CD4-positive, alpha-beta T cell (primary cell): ENCODE measurements at regions of chr16 and their contacts with region 1.

Region 1: GRCh38 chr16:19886073-19886941 is 1.7 kb upstream of the GPRC5B start:
- DNase-seq: peak; percentile 67 to 90 (median 79)
- ATAC-seq: peak; percentile 69
- H3K4me3 ChIP-seq: peak overlapping the region; percentile 69
- H3K4me3 Mint-ChIP-seq: peak overlapping the region; percentile 91
- H3K27ac ChIP-seq: no peak overlapping the region
- H3K27ac Mint-ChIP-seq: peak overlapping the region; percentile 22
- H3K4me1 ChIP-seq: peaks cover 34% of the 10 kb centered on the region
- H3K4me1 Mint-ChIP-seq: peaks cover 29% of the 10 kb centered on the region
- H3K27me3 ChIP-seq: peaks cover 32 to 35% of the 10 kb centered on the region in 2 experiments
- H3K27me3 Mint-ChIP-seq: peaks cover 33% of the 10 kb centered on the region
- CTCF ChIP-seq: peak; percentile 99

Region 2: DNA sequence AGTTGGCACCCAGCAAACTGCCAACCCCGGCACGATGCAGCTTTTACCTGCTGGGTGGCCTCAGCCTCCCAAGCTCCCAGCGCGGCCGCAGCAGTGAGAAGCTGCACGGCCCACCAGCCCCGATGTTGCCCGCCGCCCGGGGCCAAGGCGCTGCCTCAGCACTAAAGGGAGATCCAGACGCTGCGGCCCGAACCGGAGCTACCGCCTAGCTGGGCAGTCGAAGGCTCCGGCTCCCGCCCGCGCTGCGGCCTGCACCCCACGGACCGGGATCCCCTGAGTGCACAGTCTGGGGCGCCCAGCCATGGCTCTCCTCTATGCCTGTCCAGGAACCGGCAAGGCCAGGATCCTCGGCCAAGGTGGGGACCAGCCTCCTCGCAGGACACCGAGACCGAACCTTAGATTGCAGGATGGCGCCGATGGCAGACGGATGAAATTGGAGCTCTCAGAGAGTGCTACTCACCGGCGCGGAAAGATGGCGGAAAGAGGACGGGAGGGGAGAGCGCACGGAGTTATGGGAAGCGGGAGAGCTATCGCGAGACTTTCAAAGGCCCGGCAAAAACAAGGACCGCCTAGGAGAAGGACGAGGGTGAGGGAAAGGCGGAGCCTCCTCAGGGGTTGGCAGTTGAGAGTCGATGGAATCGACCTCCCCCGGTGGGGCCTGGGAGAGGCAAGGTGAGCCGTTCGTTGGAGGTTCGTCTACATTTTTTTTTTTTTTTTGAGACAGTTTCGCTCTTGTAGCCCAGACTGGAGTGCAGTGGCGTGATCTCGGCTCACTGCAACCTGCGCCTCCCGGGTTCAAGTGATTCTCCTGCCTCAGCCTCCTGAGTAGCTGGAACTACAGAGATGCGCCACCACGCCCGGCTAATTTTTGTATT is 1096.2 kb before region 1 on chr16 and contains the start of gene RPS15A:
- CTCF ChIA-PET with region 1: no interaction called
- POLR2A ChIA-PET with region 1: no interaction called
- intact Hi-C with region 1: loop called in 1 of 2 experiments (anchors 5 kb)
- DNase-seq: peak; percentile 84 to 99 (median 89)
- ATAC-seq: peak; percentile 94
- H3K4me3 ChIP-seq: peak within 1 kb of the TSS; percentile 79
- H3K4me3 Mint-ChIP-seq: peak within 1 kb of the TSS; percentile 92
- H3K27ac ChIP-seq: peak within 1 kb of the TSS; percentile 63 to 66
- H3K27ac Mint-ChIP-seq: peak within 1 kb of the TSS; percentile 83
- H3K4me1 ChIP-seq: peaks cover 47% of the 10 kb centered on the region
- H3K4me1 Mint-ChIP-seq: peaks cover 49% of the 10 kb centered on the region
- H3K27me3 ChIP-seq: no peaks in the 10 kb centered on the region
- H3K27me3 Mint-ChIP-seq: no peaks in the 10 kb centered on the region
- CTCF ChIP-seq: no peak
- total RNA-seq, gene RPS15A: 3,821 to 3,943 TPM

Region 3: DNA sequence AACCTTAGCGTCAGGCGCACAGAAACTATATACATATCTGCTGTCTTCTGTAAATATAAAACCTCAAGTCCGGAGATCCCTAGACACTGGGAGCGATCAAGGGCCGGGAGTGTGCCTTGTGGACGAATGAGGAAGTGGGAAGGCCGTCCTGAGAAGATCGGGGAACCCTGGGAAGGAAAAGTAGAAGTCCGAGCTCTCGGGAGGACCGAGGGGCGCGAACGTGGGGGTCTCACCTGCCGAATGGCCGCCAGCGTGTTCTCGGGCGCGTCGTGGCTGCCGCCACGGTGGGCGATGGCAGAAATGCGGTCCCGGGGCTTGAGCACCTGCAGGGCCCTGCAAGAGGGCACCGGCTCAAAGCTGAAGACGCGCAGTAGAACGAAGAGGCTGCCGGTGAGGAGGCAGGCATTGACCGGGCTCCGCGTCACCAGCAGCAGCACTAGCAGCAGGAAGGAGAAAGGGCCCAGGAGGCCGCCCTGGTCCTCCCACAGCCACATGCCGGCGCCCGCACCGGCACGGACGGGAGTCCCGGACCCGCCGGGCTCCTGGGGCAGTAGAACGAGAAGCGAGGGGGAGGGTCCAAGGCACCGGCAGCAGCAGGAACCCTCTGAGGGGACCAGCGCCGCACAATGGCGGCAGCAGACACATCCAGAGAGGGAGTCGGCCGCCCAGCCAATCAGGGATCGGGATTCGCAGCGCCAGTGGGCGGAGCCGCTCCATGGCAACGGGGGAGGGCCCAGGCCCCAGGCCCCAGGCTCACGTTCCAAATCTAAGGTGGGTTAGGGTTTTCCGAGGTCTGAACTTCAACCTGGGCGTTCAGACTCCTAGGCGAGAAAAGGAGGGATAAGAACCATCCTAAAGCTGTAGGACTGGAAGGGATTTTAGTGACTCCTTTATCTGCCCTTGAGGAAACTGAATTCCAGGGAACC is 364.6 kb before region 1 on chr16 and contains the start of gene GDE1:
- CTCF ChIA-PET with region 1: no interaction called
- POLR2A ChIA-PET with region 1: no interaction called
- intact Hi-C with region 1: loop called in 1 of 2 experiments (anchors 2 kb)
- DNase-seq: peak; percentile 85 to 97 (median 93)
- ATAC-seq: peak; percentile 76
- H3K4me3 ChIP-seq: peak within 1 kb of the TSS; percentile 93
- H3K4me3 Mint-ChIP-seq: peak within 1 kb of the TSS; percentile 99
- H3K27ac ChIP-seq: peak within 1 kb of the TSS; percentile 58 to 78
- H3K27ac Mint-ChIP-seq: peak within 1 kb of the TSS; percentile 84
- H3K4me1 ChIP-seq: peaks cover 55% of the 10 kb centered on the region
- H3K4me1 Mint-ChIP-seq: peaks cover 69% of the 10 kb centered on the region
- H3K27me3 ChIP-seq: no peaks in the 10 kb centered on the region
- H3K27me3 Mint-ChIP-seq: no peaks in the 10 kb centered on the region
- CTCF ChIP-seq: peak; percentile 27
- total RNA-seq, gene GDE1: 22.0 to 22.2 TPM

Region 4: DNA sequence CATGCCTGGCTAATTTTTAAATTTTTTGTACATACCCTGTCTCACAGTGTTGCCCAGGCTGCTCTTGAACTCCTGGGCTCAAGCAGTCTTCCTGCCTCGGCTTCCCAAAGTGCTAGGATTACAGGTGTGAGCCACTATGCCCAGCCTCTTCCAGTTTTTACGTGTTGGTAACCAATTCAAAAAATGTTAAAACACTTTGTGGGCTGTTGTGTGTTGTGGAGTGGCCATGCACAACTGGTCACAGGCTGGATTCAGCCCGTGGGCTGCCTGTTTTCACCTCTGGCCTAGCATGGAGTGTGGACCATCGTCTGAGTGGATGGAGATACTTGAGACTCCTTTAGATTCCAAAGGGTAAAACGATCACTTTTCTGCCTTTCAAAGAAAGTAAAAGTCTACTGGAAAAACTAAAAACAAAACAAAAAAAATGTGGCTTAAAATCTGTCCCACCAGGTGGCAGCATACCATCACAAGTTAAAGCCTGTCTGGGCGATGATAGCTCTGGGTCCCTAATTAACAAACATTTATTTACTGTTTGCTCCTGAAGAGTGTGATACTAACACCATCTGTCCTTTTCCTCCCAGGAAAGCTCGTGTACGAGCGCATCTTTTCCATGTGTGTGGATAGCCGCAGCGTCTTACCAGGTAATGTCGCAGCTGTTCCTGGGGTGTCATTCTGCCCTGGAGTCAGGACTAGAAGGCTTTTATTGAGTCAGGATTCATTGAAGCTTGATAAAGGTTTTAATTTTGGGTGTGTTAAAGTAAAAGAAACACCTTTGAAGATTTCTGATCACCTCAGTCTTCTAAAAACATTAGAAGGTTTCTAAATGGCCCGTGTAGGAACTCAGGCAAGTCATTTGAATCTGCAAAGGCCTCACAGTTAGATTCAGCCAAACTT is 285.0 kb before region 1 on chr16:
- CTCF ChIA-PET with region 1: interaction called, 28 read pairs
- POLR2A ChIA-PET with region 1: interaction called, 5 read pairs
- intact Hi-C with region 1: loop called in 1 of 2 experiments (anchors 1 kb)
- DNase-seq: peak in 13 of 14 experiments; percentile 1 to 72 (median 18)
- ATAC-seq: no peak
- H3K4me3 ChIP-seq: no peak overlapping the region
- H3K4me3 Mint-ChIP-seq: no peak overlapping the region
- H3K27ac ChIP-seq: no peak overlapping the region
- H3K27ac Mint-ChIP-seq: no peak overlapping the region
- H3K4me1 ChIP-seq: no peaks in the 10 kb centered on the region
- H3K4me1 Mint-ChIP-seq: no peaks in the 10 kb centered on the region
- H3K27me3 ChIP-seq: no peaks in the 10 kb centered on the region
- H3K27me3 Mint-ChIP-seq: no peaks in the 10 kb centered on the region
- CTCF ChIP-seq: peak; percentile 80

Region 5: DNA sequence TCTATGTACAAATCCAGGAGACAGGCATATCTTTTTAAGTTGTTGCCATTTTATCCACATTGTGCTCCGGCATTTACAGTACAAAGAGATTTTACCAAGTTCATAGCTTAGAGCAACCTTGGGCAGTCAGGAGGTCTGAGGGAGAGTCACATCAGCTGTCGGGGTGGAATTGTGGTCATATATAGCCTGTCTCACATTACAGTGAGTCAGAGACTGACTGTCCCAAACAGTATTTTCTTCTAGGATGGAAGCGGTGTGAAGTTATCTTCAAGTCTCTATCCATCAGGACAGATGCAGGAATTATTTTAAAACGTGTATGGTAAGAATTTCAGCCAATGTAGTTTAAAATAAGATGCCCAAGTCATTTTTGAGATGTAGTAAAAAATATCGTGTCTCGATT is 54.6 kb before region 1 on chr16:
- CTCF ChIA-PET with region 1: no interaction called
- POLR2A ChIA-PET with region 1: no interaction called
- intact Hi-C with region 1: no loop called
- DNase-seq: no peak
- ATAC-seq: no peak
- H3K4me3 ChIP-seq: no peak overlapping the region
- H3K4me3 Mint-ChIP-seq: no peak overlapping the region
- H3K27ac ChIP-seq: no peak overlapping the region
- H3K27ac Mint-ChIP-seq: no peak overlapping the region
- H3K4me1 ChIP-seq: no peaks in the 10 kb centered on the region
- H3K4me1 Mint-ChIP-seq: no peaks in the 10 kb centered on the region
- H3K27me3 ChIP-seq: no peaks in the 10 kb centered on the region
- H3K27me3 Mint-ChIP-seq: no peaks in the 10 kb centered on the region
- CTCF ChIP-seq: no peak

Region 6: DNA sequence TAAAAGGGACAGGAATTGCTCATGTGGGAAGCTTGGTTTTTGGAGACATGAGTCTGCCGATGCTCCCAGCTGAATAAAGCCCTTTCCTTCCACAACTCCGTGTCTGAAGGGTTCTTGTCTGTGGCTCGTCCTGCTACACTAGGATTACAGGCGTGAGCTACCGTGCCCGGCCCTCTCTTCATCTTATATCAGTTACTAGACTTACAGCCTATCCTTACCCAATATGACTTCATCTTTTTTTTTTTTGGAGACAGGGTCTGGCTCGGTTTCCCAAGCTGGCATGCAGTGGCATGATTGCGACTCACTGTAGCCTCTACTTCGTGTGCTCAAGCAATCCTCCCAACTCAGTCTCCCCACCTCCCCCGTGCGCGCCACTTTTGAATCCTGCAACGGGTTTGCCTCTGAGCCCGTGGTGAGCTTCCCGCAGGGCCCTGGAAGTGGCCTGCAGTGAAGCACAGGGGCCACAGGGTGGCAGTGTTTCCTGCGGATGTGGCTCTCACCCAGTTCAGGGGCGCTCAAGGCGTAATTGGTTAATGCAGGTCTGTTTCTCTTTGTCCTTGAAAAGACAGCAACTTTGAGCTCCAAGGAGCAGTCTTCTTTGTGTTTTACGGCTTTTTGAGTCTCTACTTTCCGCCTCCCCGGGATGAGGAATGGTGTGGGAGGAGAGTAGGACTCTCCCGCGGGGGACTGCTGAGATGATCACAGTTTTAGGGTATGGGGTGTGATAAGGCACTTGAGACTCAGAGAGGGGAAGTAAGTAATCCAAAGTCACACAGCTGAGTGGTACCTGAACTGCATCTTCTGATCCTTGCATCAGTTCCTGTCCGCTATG is 21.1 kb after region 1 on chr16:
- CTCF ChIA-PET with region 1: interaction called, 27 read pairs
- POLR2A ChIA-PET with region 1: interaction called, 3 read pairs
- intact Hi-C with region 1: no loop called
- DNase-seq: peak; percentile 54 to 83 (median 63)
- ATAC-seq: peak; percentile 100
- H3K4me3 ChIP-seq: peak overlapping the region; percentile 24
- H3K4me3 Mint-ChIP-seq: peak overlapping the region; percentile 66
- H3K27ac ChIP-seq: no peak overlapping the region
- H3K27ac Mint-ChIP-seq: no peak overlapping the region
- H3K4me1 ChIP-seq: peaks cover 10% of the 10 kb centered on the region
- H3K4me1 Mint-ChIP-seq: peaks cover 10% of the 10 kb centered on the region
- H3K27me3 ChIP-seq: peaks cover 0 to 3% of the 10 kb centered on the region in 2 experiments
- H3K27me3 Mint-ChIP-seq: peaks cover 19% of the 10 kb centered on the region
- CTCF ChIP-seq: peak; percentile 97

Region 7: DNA sequence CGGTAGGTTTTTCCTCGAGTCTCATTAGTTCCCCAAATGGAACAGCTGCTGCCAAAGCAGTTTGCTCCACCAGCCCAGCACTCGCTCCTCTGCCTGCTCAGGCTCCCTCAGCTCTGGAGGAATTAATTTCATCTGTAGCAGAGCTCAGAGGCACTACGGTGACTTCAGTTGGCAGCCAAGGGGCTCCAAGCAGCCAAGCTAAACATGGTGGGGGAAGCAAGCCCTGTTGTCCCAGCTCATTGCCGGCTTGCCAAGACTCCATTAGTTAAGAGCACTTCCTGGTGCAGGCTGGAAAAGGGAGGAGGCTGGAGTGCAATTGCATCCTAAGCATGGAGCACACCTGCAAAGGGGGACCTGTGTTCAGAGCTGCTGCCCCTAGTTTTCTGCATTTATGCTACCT is 77.0 kb after region 1 on chr16:
- CTCF ChIA-PET with region 1: no interaction called
- POLR2A ChIA-PET with region 1: no interaction called
- intact Hi-C with region 1: no loop called
- DNase-seq: no peak
- ATAC-seq: no peak
- H3K4me3 ChIP-seq: no peak overlapping the region
- H3K4me3 Mint-ChIP-seq: no peak overlapping the region
- H3K27ac ChIP-seq: no peak overlapping the region
- H3K27ac Mint-ChIP-seq: no peak overlapping the region
- H3K4me1 ChIP-seq: no peaks in the 10 kb centered on the region
- H3K4me1 Mint-ChIP-seq: no peaks in the 10 kb centered on the region
- H3K27me3 ChIP-seq: peaks cover 0 to 5% of the 10 kb centered on the region in 2 experiments
- H3K27me3 Mint-ChIP-seq: peaks cover 23% of the 10 kb centered on the region
- CTCF ChIP-seq: no peak

Region 8: GRCh38 chr16:20260215-20261007 is 374.1 kb after region 1 on chr16:
- CTCF ChIA-PET with region 1: no interaction called
- POLR2A ChIA-PET with region 1: no interaction called
- intact Hi-C with region 1: no loop called
- DNase-seq: no peak
- ATAC-seq: no peak
- H3K4me3 ChIP-seq: no peak overlapping the region
- H3K4me3 Mint-ChIP-seq: no peak overlapping the region
- H3K27ac ChIP-seq: no peak overlapping the region
- H3K27ac Mint-ChIP-seq: no peak overlapping the region
- H3K4me1 ChIP-seq: no peaks in the 10 kb centered on the region
- H3K4me1 Mint-ChIP-seq: no peaks in the 10 kb centered on the region
- H3K27me3 ChIP-seq: no peaks in the 10 kb centered on the region
- H3K27me3 Mint-ChIP-seq: peaks cover 13% of the 10 kb centered on the region
- CTCF ChIP-seq: no peak